Activated CD8-positive, alpha-beta T cell treated with anti-CD3 and anti-CD28 coated beads for 36 hours (primary cell): ENCODE measurements at regions of chr1 and their contacts with region 1.

Region 1: DNA sequence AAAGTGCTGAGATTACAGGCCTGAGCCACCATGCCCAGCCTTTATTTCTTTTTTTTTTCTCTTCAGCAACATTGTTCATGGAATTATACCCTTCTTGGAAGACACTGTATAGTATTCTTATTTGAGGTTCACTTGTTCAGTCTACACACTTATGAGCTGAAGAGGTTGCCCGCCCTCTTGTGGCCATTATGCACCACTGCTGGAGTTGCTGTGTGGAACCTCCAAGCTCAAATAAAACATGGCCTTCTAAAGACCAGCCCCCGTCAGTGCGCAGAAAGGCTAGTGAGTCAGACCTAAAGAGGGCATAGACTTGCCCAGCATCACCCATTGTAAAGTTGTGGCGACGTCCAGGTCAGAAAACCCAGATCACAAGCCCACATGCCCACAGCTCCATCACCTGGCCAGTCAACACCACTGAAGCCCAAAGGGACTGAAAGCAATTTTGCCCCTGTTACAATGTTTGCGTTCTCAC is 20.4 kb downstream of the LURAP1 start:
- DNase-seq: peak; percentile 87
- ATAC-seq: peak; percentile 98
- H3K4me3 Mint-ChIP-seq: no peak overlapping the region
- H3K27ac Mint-ChIP-seq: no peak overlapping the region
- H3K4me1 Mint-ChIP-seq: peaks cover 2% of the 10 kb centered on the region
- H3K27me3 Mint-ChIP-seq: no peaks in the 10 kb centered on the region
- CTCF ChIP-seq: peak; percentile 88

Region 2: DNA sequence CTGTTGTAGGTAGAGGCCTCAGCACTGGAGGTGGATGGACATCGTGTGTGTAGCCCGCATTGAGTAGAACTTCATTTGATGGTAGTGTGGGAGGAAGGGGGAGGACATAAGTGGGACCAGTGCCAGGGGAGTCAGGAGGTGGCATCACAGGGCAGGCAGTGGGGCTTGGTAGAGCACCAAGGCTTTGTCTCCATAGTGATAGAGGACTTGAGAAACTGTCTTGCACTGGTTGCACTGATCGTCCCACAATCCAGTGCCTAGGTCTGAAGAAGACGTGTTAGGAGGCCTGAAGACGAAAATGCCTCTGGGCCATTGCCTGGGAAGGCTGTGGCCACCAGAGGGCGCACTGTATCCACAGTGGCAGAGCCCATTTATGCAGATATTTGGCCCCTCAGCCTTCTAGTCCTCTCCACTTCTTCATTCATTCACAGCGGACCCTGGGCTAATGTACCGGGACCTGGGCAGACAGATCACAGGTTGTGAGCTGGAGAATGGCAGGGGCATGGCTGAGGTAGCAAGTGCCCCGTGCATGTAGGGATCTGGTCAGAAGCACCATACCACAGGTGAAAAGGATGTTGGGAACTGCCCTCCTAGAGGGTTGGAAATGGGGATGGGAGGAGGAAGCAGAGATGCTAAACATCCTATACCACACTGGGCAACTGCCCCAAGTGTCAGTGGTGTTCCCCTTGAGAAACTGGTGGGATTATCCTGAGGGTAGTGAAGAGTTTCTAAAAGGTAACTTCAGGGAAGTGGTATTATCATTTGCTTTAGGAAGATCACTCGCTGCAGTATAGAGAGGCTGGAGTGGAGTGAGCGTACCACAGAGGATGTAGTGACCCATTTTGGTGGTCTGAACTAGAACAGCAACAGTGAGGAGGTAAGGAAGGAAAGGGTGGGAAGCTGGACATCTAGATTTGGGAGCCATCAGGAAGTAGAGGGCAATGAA is 186.3 kb before region 1 on chr1:
- CTCF ChIA-PET with region 1: interaction called, 29 read pairs
- POLR2A ChIA-PET with region 1: interaction called, 3 read pairs
- intact Hi-C with region 1: loop called (anchors 2 kb)
- DNase-seq: peak; percentile 91
- ATAC-seq: peak; percentile 89
- H3K4me3 Mint-ChIP-seq: no peak overlapping the region
- H3K27ac Mint-ChIP-seq: no peak overlapping the region
- H3K4me1 Mint-ChIP-seq: no peaks in the 10 kb centered on the region
- H3K27me3 Mint-ChIP-seq: no peaks in the 10 kb centered on the region
- CTCF ChIP-seq: peak; percentile 95

Region 3: DNA sequence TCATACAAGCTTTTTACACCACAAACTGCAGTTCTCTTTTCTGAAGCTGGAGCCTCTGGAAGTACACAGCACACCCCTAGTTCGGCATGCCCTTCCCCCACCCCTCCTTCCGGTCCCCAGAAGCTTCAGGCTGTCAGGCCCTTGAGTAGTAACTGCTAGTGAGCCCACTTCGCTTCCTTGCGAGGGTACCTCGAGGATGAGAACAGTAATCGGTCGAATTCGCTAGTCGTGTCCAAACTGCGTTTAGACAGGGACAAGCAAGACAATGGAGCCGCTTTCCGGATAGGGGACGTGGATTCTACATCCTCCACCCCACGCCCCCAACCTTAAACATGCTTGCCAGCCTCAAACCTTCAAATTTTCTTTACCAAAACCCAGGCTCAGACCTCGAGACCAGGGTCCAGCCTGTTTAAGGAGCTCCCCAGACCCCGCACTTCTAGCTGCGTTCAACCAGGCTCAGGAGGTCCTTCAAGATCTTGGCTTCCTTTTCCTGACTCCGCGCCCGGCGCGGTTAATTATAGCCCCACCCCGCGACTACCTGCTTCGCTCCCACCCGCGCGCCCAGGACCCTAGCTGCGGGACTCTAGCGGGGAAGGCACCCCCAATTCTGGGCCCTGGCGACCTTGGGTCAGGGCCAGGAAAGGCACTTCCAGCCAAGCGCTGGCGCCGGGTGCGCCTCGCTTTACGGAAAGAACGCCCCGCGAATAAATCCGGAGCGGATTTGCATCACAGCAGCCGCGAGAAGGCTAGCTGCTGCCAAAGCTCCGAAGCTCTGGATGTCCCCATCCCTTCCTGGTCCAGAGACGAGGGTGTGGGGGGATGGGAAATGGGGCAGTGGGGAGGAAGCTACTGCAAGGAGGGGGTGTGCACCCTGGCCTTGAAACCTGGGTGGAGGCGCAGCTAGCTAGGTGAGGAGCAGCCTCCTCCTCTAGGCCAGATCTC is 56.7 kb before region 1 on chr1:
- CTCF ChIA-PET with region 1: interaction called, 14 read pairs
- POLR2A ChIA-PET with region 1: interaction called, 5 read pairs
- intact Hi-C with region 1: no loop called
- DNase-seq: peak; percentile 64
- ATAC-seq: peak; percentile 73
- H3K4me3 Mint-ChIP-seq: peak overlapping the region; percentile 67
- H3K27ac Mint-ChIP-seq: peak overlapping the region; percentile 84
- H3K4me1 Mint-ChIP-seq: peaks cover 17% of the 10 kb centered on the region
- H3K27me3 Mint-ChIP-seq: no peaks in the 10 kb centered on the region
- CTCF ChIP-seq: no peak

Region 4: DNA sequence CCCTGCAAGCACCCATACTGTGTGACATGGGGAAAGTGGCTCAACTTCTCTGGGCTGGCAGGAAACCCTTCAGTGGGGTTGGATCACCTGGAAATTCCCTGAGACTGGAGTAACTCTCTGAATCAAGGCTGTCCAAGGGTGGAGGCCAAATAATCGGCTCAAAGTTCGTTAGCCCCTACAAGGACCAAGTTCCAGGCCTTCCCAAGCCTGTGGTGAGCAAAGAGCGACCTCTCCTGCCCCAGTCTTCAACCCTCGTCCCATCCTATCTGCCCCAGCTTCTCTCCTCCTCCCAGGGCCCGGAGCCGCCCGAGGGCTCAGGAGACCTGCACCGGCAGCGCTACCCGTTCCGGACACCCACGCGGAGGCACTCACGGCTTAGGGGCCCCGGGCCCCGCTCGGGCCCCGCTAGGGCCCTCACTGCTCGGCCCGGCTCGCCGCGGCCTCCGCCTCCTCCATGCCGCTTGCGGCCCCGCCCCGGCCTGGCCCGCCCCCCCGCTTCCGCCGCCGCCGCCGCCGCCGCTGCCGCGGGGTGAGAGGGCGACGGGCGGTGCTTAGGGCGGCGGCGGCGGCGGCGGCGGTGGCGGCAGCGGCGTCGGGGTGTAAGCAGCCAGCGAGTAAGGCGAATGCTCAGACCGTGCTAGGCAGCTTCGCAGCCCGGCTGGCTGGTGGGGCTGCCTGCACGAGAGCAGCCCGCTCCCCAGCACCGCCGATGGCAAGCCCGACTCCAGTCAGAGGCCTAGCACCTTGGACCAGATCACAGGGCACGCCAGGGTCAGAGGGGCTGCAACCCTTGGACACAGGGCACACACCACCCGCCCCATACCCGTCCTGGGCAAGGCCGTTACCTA is 25.3 kb before region 1 on chr1 and contains the start of gene POMGNT1:
- CTCF ChIA-PET with region 1: interaction called, 21 read pairs
- POLR2A ChIA-PET with region 1: interaction called, 4 read pairs
- intact Hi-C with region 1: no loop called
- DNase-seq: peak; percentile 75
- ATAC-seq: peak; percentile 96
- H3K4me3 Mint-ChIP-seq: peak within 1 kb of the TSS; percentile 85
- H3K27ac Mint-ChIP-seq: peak within 1 kb of the TSS; percentile 82
- H3K4me1 Mint-ChIP-seq: peaks cover 20% of the 10 kb centered on the region
- H3K27me3 Mint-ChIP-seq: peaks cover 1% of the 10 kb centered on the region
- CTCF ChIP-seq: no peak
- total RNA-seq, gene POMGNT1: 25.4 to 28.1 TPM

Region 5: DNA sequence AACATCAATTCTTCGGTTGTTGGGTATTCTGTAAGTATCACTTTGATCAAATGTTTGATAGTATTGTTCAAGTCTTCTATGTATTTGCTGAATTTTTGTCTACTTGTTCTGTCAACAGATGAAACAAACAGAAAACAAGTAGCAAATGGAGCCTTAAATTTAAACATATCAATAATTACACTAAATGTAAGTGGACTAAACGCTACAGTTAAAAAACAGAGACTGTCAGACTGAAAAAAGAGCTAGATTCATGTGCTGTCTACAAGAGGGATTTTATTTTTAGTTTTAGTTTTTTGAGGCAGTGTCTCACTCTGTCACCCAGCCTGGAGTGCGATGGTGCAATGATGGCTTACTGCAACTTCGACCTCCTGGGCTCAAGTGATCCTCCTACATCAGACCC is 13.4 kb after region 1 on chr1:
- CTCF ChIA-PET with region 1: interaction called, 38 read pairs
- POLR2A ChIA-PET with region 1: no interaction called
- intact Hi-C with region 1: no loop called
- DNase-seq: no peak
- ATAC-seq: no peak
- H3K4me3 Mint-ChIP-seq: no peak overlapping the region
- H3K27ac Mint-ChIP-seq: no peak overlapping the region
- H3K4me1 Mint-ChIP-seq: no peaks in the 10 kb centered on the region
- H3K27me3 Mint-ChIP-seq: no peaks in the 10 kb centered on the region
- CTCF ChIP-seq: no peak

Region 6: DNA sequence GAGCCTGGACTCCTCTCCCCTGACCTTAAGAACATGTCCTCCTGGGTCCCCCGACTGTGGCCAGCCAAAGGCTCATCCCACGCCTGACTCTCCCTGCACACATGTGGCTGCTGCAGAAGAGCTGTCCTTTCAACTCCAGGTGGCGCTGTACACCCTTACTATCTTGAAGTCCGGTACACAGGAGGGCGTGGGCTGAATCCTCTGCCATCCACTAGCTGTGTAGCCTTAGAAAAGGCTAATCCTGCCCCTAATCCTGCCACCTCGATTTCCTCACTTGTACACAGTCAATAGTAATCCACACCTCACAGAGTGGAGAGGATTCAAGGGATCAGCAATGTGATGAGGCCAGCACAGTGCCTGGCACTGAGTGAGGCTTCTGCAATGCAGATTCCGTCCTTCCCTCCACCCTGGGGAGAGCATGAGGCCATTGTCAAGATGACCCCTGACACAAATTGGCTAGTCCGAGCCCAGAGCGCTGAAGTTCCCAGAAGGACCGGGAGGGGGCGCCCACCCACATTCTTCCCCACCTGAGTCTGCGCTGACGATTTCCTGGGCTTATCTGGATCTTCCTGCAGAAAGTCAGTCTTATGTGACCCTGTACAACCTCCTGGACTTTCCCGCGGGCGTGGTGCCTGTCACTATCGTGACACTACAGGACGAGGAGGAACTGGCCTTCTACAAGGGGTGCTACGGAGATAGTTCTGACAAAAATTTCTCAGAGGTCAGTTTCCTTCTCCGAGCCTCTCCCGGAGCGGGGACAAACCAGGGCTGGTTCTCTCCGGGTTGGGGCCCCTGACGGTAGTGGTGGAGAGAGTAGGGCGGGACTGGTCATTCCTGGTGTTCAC is 219.0 kb after region 1 on chr1:
- CTCF ChIA-PET with region 1: no interaction called
- POLR2A ChIA-PET with region 1: no interaction called
- intact Hi-C with region 1: no loop called
- DNase-seq: peak; percentile 86
- ATAC-seq: peak; percentile 86
- H3K4me3 Mint-ChIP-seq: peak overlapping the region; percentile 79
- H3K27ac Mint-ChIP-seq: peak overlapping the region; percentile 40
- H3K4me1 Mint-ChIP-seq: peaks cover 10% of the 10 kb centered on the region
- H3K27me3 Mint-ChIP-seq: peaks cover 18% of the 10 kb centered on the region
- CTCF ChIP-seq: peak; percentile 99